Activated CD4-positive, alpha-beta T cell treated with anti-CD3 and anti-CD28 coated beads, Interleukin-2, amount 10 ng/mL, durations not matched to agents 24 days and 14 days (primary cell): ENCODE measurements at regions of chr12 and their contacts with region 1.

Region 1: DNA sequence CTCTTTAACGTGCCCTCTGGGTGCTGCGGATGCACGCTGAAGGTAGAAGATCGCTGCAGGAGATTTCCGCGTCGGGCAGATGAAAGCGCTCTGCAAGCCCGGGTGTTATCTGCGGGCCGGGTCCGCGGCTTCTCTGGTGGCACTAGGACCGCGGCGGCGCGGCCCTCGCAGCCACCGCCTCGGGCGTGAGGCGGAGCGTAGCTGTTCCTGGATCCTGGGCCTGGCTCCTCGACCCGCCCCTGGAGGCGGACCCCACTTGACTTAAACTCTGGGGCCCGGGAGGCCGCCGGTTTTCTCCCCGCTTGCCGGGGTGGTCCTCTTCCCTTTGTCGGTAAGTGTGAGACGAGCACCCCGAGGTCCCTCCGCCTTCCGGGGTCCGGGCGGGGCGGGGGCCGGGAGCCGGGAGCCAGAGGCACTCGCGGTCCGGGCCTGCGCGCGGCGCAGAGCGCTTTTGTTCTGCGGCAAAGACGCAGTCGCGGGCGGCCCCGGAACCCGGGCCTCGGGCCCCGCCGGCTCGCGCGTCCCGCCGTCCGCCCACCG is at the start of gene RESF1:
- DNase-seq: peak; percentile 96
- H3K4me3 Mint-ChIP-seq: peak within 1 kb of the TSS; percentile 93
- H3K27ac Mint-ChIP-seq: peak within 1 kb of the TSS; percentile 99
- H3K4me1 Mint-ChIP-seq: peaks cover 56% of the 10 kb centered on the region
- H3K27me3 Mint-ChIP-seq: no peaks in the 10 kb centered on the region
- total RNA-seq, gene RESF1: 51.1 and 55.5 TPM in 2 replicates

Region 2: GRCh38 chr12:31325877-31326631 is 633.2 kb before region 1 on chr12 and contains the start of gene SINHCAF:
- intact Hi-C with region 1: loop called (anchors 10 kb)
- DNase-seq: peak; percentile 100
- H3K4me3 Mint-ChIP-seq: peak within 1 kb of the TSS; percentile 99
- H3K27ac Mint-ChIP-seq: peak within 1 kb of the TSS; percentile 100
- H3K4me1 Mint-ChIP-seq: peaks cover 30% of the 10 kb centered on the region
- H3K27me3 Mint-ChIP-seq: peaks cover 12% of the 10 kb centered on the region
- total RNA-seq, gene SINHCAF: 261 and 277 TPM in 2 replicates

Region 3: DNA sequence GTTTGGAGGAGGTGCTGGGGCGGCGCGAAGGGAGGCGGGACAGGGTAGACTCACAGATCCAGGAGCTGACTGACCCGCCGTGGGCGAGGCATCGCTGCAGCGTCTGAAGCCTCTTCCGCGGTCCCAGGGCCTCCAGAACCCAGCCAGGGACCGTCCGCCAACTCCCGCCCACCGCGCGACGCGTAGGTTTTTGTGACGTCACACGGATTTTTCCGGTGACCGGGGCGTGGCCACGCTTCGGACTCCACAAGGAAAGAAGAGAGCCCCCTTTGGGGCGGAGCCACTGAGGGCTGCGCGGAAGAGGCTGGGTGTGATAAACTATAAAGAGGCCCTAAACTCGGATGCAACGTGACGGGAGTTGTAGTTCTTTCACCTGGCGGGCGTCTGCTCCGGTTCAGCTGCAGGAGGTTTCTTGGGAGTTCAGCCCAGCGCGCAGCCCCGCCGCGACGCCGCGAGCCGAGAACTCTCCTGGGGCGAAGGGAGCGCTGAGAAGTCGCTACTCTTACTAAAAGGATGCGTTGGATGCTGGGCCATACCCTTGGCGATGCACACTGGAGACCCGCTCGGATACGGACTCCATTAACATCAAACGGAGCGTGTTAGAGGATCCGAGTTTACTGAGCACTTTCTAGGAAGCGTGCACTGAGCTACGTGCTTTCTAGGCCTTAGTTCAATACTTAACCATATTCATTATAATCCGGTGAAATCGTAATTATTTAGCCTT is 230.2 kb before region 1 on chr12 and contains the start of gene AMN1:
- intact Hi-C with region 1: loop called (anchors 1 kb)
- DNase-seq: peak; percentile 100
- H3K4me3 Mint-ChIP-seq: peak within 1 kb of the TSS; percentile 95
- H3K27ac Mint-ChIP-seq: peak within 1 kb of the TSS; percentile 99
- H3K4me1 Mint-ChIP-seq: peaks cover 44% of the 10 kb centered on the region
- H3K27me3 Mint-ChIP-seq: no peaks in the 10 kb centered on the region
- total RNA-seq, gene AMN1: 2.3 and 2.4 TPM in 2 replicates

Region 4: DNA sequence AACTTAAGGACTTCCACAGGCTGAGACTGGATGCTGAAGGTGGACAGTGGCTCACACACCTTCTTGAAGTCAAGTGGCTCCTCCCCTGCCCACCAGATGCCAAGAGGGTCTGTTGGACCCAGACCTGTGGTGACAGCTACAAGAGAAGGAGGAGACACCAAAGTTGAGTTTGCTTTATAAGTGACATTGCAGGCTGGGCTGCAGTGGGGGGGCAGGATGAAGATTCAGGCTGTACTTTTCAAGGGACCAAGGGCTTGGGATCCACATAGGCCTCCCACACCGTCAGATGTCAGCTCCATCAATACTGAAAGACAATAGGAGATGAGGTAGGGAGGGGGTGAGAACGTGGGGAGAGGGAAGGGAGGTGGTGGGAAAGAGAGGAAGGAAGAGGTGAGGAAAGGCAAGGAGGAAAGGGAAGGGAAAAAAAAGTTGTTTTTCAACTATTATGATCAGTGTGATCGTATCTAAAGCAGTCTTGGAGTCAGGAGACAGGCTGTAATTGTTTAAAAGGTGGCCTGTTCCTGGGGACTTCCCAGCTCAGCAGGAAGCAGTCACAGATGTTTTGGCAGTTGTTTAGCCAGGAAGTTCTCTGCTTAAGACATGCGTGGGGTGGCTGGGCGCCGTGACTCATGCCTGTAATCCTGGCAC is 84.1 kb before region 1 on chr12:
- intact Hi-C with region 1: loop called (anchors 1 kb)
- DNase-seq: peak; percentile 89
- H3K4me3 Mint-ChIP-seq: peak overlapping the region; percentile 68
- H3K27ac Mint-ChIP-seq: peak overlapping the region; percentile 99
- H3K4me1 Mint-ChIP-seq: peaks cover 20% of the 10 kb centered on the region
- H3K27me3 Mint-ChIP-seq: no peaks in the 10 kb centered on the region

Region 5: GRCh38 chr12:31890295-31891285 is 68.6 kb before region 1 on chr12:
- intact Hi-C with region 1: no loop called
- DNase-seq: peak; percentile 66
- H3K4me3 Mint-ChIP-seq: peak overlapping the region; percentile 50
- H3K27ac Mint-ChIP-seq: peak overlapping the region; percentile 79
- H3K4me1 Mint-ChIP-seq: peaks cover 29% of the 10 kb centered on the region
- H3K27me3 Mint-ChIP-seq: no peaks in the 10 kb centered on the region

Region 6: DNA sequence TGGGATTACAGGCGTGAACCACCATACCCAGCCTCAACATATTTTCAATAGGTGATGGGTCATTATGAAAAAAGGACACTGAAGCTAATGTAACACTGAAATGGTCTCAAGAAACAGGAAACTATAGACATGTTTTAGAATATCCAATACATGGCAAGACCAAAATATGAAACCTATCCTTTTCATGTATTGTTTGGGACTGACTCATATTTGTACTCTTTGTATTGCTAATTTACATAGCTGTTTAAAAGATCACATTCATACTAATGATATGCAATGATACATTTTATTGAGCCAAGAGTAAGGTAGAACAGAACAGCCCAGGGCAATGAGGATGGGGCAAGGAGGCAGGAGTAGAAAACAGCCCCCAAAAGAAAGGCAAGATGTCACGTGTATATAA is 32.6 kb after region 1 on chr12:
- intact Hi-C with region 1: loop called (anchors 1 kb)
- DNase-seq: no peak
- H3K4me3 Mint-ChIP-seq: peak overlapping the region; percentile 36
- H3K27ac Mint-ChIP-seq: peak overlapping the region; percentile 76
- H3K4me1 Mint-ChIP-seq: peaks cover 32% of the 10 kb centered on the region
- H3K27me3 Mint-ChIP-seq: no peaks in the 10 kb centered on the region

Region 7: DNA sequence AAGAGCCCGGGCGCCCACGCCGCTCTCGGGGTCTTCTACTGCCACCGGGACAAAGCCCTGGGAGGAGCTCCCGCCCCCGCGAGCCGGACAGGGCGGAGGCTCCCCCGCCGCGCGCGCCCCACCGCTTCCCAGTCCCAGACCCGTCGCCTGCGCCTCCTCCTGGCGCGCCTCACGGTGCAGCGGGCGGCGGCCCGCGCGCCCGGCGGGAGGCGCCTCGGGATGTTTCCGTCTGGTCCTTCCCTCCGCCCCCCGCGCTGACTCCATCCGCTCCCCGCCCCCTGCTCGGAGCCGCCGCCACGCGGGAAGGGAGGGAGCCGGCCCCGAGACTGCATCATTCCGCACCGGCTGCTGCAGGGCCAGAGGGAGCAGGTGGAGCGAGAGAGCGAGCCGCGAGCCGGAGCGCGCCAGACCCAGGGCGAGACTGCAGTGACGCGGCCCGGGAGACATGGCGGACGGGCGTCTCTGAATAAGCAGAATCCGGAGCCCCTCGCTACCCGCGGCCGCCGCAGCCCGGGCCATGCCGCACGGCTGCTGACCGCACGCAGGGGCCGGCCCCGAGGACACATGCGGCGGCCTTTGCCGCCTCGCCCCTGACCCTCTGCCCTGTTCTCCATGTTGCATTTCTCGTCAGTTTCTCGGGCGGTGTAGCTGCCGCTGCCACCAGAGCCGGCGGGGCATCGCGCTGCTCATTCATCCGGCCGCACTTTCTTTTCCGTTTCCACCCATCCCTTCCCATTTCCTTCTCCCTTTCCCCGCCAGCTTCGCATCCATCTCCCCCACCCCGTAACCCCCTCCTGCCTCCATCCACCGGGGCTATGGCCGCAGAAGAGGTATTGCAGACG is 147.5 kb after region 1 on chr12 and contains the start of gene BICD1:
- intact Hi-C with region 1: loop called (anchors 2 kb)
- DNase-seq: peak; percentile 94
- H3K4me3 Mint-ChIP-seq: peak within 1 kb of the TSS; percentile 99
- H3K27ac Mint-ChIP-seq: peak within 1 kb of the TSS; percentile 92
- H3K4me1 Mint-ChIP-seq: peaks cover 23% of the 10 kb centered on the region
- H3K27me3 Mint-ChIP-seq: peaks cover 14% of the 10 kb centered on the region
- total RNA-seq, gene BICD1: 16.0 and 18.2 TPM in 2 replicates

Region 8: GRCh38 chr12:32755654-32756475 is 796.6 kb after region 1 on chr12 and contains the start of gene YARS2:
- intact Hi-C with region 1: loop called (anchors 2 kb)
- DNase-seq: peak; percentile 96
- H3K4me3 Mint-ChIP-seq: peak within 1 kb of the TSS; percentile 93
- H3K27ac Mint-ChIP-seq: peak within 1 kb of the TSS; percentile 93
- H3K4me1 Mint-ChIP-seq: peaks cover 23% of the 10 kb centered on the region
- H3K27me3 Mint-ChIP-seq: no peaks in the 10 kb centered on the region
- total RNA-seq, gene YARS2: 30.5 and 33.0 TPM in 2 replicates